Mammary epithelial cell (primary cell): ENCODE measurements at regions of chr16 and their contacts with region 1.

Region 1: DNA sequence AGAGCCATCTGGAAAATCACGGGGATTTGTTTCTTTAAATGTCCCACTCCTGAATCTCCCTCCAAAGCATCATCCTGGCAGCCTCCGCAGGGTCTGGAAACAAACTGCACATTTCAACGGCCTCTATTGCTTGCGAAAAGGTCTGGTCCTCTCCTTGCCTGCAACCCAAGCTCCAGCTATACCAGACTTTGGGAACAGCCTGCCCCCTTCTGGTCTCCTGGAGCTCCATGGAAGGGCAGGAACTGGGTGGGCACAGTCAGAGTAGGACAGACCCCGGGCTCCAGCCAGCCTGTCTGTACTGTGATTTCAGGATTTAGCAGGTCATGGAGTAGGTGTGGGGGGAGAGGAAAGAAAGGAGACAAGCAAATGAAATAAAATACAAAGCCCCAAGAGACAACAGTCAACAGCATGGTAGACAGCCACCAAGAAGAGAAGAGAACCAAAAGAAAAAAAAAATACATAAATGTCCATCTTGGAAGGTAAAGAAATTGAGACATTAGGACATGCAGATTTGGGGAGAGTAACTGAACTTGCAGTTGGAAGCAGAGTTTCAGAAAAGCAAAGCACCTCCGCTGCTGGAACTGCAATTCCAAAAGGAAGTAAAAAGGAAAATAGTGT is 2.7 kb downstream of the XYLT1 start:
- DNase-seq: peak; percentile 6
- H3K4me3 ChIP-seq: no peak overlapping the region
- H3K27ac ChIP-seq: no peak overlapping the region
- H3K4me1 ChIP-seq: peaks cover 28% of the 10 kb centered on the region
- H3K27me3 ChIP-seq: no peaks in the 10 kb centered on the region
- CTCF ChIP-seq: peak; percentile 54 to 85

Region 2: GRCh38 chr16:16778332-16778731 is 689.7 kb before region 1 on chr16:
- CTCF ChIA-PET with region 1: no interaction called
- dilution Hi-C with region 1: no loop called
- in situ Hi-C with region 1: no loop called
- intact Hi-C with region 1: no loop called
- DNase-seq: no peak
- H3K4me3 ChIP-seq: no peak overlapping the region
- H3K27ac ChIP-seq: no peak overlapping the region
- H3K4me1 ChIP-seq: no peaks in the 10 kb centered on the region
- H3K27me3 ChIP-seq: no peaks in the 10 kb centered on the region
- CTCF ChIP-seq: no peak

Region 3: DNA sequence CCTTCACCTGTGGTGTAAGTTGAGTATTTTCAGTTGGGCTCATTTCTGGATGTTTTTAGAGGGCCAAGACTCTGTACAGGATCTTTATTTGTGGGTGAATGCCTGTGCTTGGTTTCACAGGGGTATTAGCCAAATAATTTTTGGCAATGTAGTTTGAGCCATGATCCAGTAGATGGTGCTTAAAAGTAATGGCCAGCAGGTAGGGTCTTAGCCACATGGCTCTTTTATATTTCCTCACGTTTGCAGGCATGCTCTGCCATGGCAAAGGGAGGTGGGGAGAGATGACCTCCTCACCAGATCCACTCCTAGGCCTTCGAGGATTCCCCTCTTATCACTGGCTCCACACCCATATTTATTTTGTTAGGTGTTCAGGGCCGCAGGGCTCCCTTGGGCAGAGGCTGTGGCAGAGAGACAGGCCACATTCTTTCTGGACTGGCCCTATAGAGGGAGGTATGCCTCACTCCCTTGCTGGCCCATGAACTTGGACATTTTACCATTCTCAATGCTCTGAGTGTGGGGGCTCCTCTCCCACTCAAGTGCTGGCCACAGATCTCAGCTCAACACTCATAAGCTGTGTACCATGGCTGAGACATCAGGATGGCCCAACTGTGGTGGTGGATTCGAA is 414.4 kb before region 1 on chr16:
- CTCF ChIA-PET with region 1: no interaction called
- dilution Hi-C with region 1: no loop called
- in situ Hi-C with region 1: no loop called
- intact Hi-C with region 1: loop called (anchors 5 kb)
- DNase-seq: no peak
- H3K4me3 ChIP-seq: no peak overlapping the region
- H3K27ac ChIP-seq: no peak overlapping the region
- H3K4me1 ChIP-seq: no peaks in the 10 kb centered on the region
- H3K27me3 ChIP-seq: no peaks in the 10 kb centered on the region
- CTCF ChIP-seq: peak in 1 of 2 donors; percentile 25

Region 4: GRCh38 chr16:17205279-17206211 is 262.5 kb before region 1 on chr16:
- CTCF ChIA-PET with region 1: no interaction called
- dilution Hi-C with region 1: no loop called
- in situ Hi-C with region 1: no loop called
- intact Hi-C with region 1: loop called (anchors 5 kb)
- DNase-seq: no peak
- H3K4me3 ChIP-seq: no peak overlapping the region
- H3K27ac ChIP-seq: no peak overlapping the region
- H3K4me1 ChIP-seq: no peaks in the 10 kb centered on the region
- H3K27me3 ChIP-seq: no peaks in the 10 kb centered on the region
- CTCF ChIP-seq: no peak

Region 5: GRCh38 chr16:17224879-17225281 is 243.2 kb before region 1 on chr16:
- CTCF ChIA-PET with region 1: no interaction called
- dilution Hi-C with region 1: no loop called
- in situ Hi-C with region 1: no loop called
- intact Hi-C with region 1: loop called (anchors 1 kb)
- DNase-seq: peak; percentile 29
- H3K4me3 ChIP-seq: no peak overlapping the region
- H3K27ac ChIP-seq: no peak overlapping the region
- H3K4me1 ChIP-seq: peaks cover 13% of the 10 kb centered on the region
- H3K27me3 ChIP-seq: no peaks in the 10 kb centered on the region
- CTCF ChIP-seq: no peak

Region 6: DNA sequence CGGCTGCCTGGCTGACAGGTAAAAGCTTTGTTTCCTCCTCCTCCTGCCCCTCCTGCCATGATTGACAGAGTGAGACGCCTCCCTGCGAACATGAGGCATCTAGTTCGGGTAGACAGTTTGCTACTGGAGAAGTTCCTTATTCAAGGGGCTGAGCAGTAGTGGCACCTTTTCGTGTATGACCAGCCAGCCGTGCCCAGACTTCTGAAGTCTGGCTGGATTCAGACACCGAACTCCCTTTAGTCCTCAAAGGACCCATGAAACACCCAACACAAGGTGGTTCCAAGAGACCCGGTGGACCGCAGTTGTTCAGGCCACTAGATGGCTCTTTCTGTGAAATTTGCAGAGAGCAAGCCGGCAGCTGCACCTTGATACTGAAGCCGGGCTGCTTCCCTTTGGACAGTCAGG is 190.1 kb before region 1 on chr16:
- CTCF ChIA-PET with region 1: no interaction called
- dilution Hi-C with region 1: no loop called
- in situ Hi-C with region 1: no loop called
- intact Hi-C with region 1: loop called (anchors 1 kb)
- DNase-seq: no peak
- H3K4me3 ChIP-seq: no peak overlapping the region
- H3K27ac ChIP-seq: no peak overlapping the region
- H3K4me1 ChIP-seq: peaks cover 10% of the 10 kb centered on the region
- H3K27me3 ChIP-seq: no peaks in the 10 kb centered on the region
- CTCF ChIP-seq: peak in 1 of 2 donors; percentile 37

Region 7: DNA sequence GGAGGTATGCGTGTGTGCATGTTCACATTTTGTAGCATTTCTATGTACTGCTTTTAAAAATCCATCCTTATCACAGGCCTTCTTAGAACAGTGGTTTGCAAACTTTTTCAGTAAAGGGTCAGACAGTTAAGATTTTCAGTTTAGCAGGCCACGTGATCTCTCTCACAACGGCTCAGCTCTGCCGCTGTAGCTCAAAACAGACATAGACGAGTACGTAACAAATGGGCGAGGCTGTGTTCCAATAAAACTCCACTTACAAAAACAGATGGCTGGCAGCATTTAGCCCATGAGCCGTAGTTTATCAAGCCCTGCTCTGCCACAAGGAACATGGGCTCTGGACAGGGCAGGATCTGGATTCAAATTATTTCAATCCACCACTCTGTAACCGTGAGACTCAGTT is 139.1 kb before region 1 on chr16:
- CTCF ChIA-PET with region 1: interaction called, 19 read pairs
- dilution Hi-C with region 1: no loop called
- in situ Hi-C with region 1: no loop called
- intact Hi-C with region 1: no loop called
- DNase-seq: no peak
- H3K4me3 ChIP-seq: no peak overlapping the region
- H3K27ac ChIP-seq: no peak overlapping the region
- H3K4me1 ChIP-seq: no peaks in the 10 kb centered on the region
- H3K27me3 ChIP-seq: no peaks in the 10 kb centered on the region
- CTCF ChIP-seq: no peak

Region 8: DNA sequence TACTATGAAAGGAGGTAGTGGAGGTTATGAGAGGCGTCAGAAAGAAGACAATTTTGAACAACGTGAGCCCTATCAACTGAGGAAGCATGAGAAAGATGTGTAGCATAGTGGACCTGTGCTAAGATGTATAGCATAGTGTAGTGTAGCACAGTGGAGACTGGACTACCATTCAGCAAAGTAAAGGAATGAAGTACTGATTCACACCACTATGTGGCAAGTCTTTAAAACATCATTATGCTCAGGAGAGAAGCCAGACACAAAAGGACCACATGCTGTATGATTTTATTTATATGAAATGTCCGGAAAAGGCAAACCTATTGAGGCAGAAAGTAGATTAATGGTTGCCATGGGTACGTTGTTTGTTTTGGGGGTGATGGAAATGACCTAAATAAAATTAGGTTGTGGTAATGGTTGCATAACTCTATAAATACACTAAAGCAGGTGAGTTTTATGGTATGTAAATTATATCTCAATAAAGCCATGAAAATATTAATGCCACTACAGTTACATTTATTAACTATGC is 23.2 kb after region 1 on chr16:
- CTCF ChIA-PET with region 1: no interaction called
- dilution Hi-C with region 1: no loop called
- in situ Hi-C with region 1: no loop called
- intact Hi-C with region 1: no loop called
- DNase-seq: no peak
- H3K4me3 ChIP-seq: no peak overlapping the region
- H3K27ac ChIP-seq: no peak overlapping the region
- H3K4me1 ChIP-seq: no peaks in the 10 kb centered on the region
- H3K27me3 ChIP-seq: no peaks in the 10 kb centered on the region
- CTCF ChIP-seq: no peak